ENCODE measurements at regions of chr1 and their contacts with region 1.

Region 1: GRCh38 chr1:24586970-24587820 is 31.3 kb downstream of the NCMAP start:
- DNase-seq: peak; percentile 54
- H3K4me3 Mint-ChIP-seq: no peak overlapping the region
- H3K27ac Mint-ChIP-seq: no peak overlapping the region
- H3K4me1 Mint-ChIP-seq: peaks cover 8% of the 10 kb centered on the region
- H3K27me3 Mint-ChIP-seq: peaks cover 8% of the 10 kb centered on the region

Region 2: GRCh38 chr1:24070821-24071393 is 516.3 kb before region 1 on chr1:
- CTCF ChIA-PET with region 1: interaction called, 11 read pairs
- POLR2A ChIA-PET with region 1: no interaction called
- DNase-seq: peak; percentile 78
- H3K4me3 Mint-ChIP-seq: no peak overlapping the region
- H3K27ac Mint-ChIP-seq: no peak overlapping the region
- H3K4me1 Mint-ChIP-seq: peaks cover 4% of the 10 kb centered on the region
- H3K27me3 Mint-ChIP-seq: peaks cover 13% of the 10 kb centered on the region

Region 3: DNA sequence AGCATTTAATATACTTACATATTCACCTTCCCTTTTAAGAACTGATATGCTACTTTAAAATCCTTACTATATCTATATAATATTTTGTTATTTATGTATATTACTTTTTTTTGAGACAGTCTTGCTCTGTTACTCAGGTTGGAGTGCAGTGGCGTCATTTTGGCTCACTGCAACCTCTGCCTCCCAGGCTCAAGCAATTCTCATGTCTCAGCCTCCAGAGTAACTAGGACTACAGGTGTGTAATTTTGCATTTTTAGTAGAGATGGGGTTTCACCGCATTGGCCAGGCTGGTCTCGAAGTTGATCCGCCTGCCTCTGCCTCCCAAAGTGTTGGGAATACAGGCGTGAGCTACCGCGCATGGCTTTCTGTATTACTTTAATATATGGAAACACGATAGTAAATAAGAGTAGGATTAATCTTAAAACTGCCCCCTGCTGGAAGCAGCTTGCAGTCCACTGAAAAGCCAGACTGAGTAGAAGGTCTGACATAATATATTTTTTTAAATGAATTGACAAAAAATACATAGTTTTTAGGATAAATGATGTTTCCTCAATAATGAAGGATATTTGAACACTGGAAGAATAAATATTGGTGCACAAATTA is 60.2 kb before region 1 on chr1:
- CTCF ChIA-PET with region 1: interaction called, 17 read pairs
- POLR2A ChIA-PET with region 1: no interaction called
- DNase-seq: peak; percentile 57
- H3K4me3 Mint-ChIP-seq: no peak overlapping the region
- H3K27ac Mint-ChIP-seq: peak overlapping the region; percentile 14
- H3K4me1 Mint-ChIP-seq: peaks cover 25% of the 10 kb centered on the region
- H3K27me3 Mint-ChIP-seq: no peaks in the 10 kb centered on the region

Region 4: DNA sequence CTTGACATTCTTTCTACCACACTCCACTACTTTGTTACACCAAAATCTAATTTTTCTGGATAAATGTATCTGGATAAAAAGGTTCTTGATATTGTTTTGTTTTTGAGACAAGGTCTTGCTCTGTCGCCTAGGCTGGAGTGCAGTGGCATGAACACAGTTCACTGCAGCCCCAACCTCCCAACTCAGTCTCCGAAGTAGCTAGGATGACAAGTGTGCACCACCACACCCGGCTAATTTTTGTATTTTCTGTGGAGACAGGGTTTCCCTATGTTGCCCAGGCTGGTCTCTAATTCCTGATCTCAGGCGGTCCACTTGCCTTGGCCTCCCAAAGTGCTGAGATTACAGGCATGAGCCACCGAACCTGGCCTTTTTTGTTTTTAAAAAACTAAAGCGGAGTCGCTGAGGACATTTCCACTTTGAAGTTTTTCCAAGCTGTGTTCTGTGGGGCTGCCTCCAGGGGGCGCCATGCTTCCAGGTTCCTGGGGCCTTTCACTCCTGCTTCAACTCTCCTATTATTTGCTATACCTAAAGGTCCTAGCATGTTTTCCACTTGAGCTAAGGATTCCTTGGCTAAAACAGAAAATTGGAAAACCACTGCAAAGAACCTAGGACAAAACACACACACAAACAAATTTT is 45.4 kb before region 1 on chr1:
- CTCF ChIA-PET with region 1: interaction called, 23 read pairs
- POLR2A ChIA-PET with region 1: interaction called, 8 read pairs
- DNase-seq: peak; percentile 47
- H3K4me3 Mint-ChIP-seq: no peak overlapping the region
- H3K27ac Mint-ChIP-seq: peak overlapping the region; percentile 81
- H3K4me1 Mint-ChIP-seq: peaks cover 66% of the 10 kb centered on the region
- H3K27me3 Mint-ChIP-seq: no peaks in the 10 kb centered on the region

Region 5: DNA sequence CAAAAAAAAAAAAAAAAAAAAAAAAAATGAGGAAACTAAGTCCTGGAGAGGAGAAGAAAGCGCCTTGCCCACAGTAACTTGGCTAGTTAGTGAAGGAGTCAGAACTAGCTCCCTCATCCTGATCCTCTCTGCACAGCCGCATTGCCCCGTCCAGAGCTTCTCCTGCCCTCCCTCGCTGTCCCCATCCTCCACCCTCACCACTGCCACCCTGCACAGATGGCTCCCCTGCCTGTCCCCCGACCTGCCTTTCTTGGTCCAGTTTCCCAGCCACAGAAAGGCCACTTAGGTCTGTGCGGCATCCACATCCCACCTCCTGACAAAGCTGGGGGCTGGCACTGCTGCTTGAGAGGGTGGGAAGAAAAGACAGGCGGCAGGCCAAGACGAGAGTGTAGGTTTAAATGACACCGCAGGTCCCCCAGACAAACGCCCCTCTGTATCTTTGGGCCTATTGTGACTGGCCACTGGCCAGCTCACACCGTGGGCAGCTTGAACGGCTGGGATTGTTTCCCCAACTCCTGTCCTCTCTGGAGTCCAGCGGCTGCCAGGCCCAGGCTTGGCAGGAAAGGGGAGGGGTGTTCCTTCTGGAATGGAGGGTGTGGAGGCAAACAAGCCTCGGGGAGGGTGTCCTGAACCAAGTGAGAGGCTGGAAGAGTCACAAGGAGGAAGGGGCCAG is 11.1 kb before region 1 on chr1:
- CTCF ChIA-PET with region 1: interaction called, 25 read pairs
- POLR2A ChIA-PET with region 1: no interaction called
- DNase-seq: no peak
- H3K4me3 Mint-ChIP-seq: no peak overlapping the region
- H3K27ac Mint-ChIP-seq: no peak overlapping the region
- H3K4me1 Mint-ChIP-seq: peaks cover 4% of the 10 kb centered on the region
- H3K27me3 Mint-ChIP-seq: no peaks in the 10 kb centered on the region